PC-3 (cell line): ENCODE measurements at regions of chr1 and their contacts with region 1.

Region 1: GRCh38 chr1:241817261-241817792 is 30.7 kb upstream of the EXO1 start:
- DNase-seq: peak; percentile 91
- ATAC-seq: peak; percentile 93
- H3K4me3 ChIP-seq: no peak overlapping the region
- H3K27ac ChIP-seq: peak overlapping the region; percentile 57
- H3K4me1 ChIP-seq: peaks cover 34% of the 10 kb centered on the region
- H3K27me3 ChIP-seq: no peaks in the 10 kb centered on the region
- CTCF ChIP-seq: no peak

Region 2: GRCh38 chr1:241749901-241750695 is 67.2 kb before region 1 on chr1:
- CTCF ChIA-PET with region 1: no interaction called
- POLR2A ChIA-PET with region 1: interaction called, 3 read pairs
- intact Hi-C with region 1: loop called (anchors 1 kb)
- DNase-seq: peak; percentile 99
- ATAC-seq: peak; percentile 63
- H3K4me3 ChIP-seq: peak overlapping the region; percentile 69
- H3K27ac ChIP-seq: peak overlapping the region; percentile 72
- H3K4me1 ChIP-seq: peaks cover 22% of the 10 kb centered on the region
- H3K27me3 ChIP-seq: no peaks in the 10 kb centered on the region
- CTCF ChIP-seq: no peak

Region 3: DNA sequence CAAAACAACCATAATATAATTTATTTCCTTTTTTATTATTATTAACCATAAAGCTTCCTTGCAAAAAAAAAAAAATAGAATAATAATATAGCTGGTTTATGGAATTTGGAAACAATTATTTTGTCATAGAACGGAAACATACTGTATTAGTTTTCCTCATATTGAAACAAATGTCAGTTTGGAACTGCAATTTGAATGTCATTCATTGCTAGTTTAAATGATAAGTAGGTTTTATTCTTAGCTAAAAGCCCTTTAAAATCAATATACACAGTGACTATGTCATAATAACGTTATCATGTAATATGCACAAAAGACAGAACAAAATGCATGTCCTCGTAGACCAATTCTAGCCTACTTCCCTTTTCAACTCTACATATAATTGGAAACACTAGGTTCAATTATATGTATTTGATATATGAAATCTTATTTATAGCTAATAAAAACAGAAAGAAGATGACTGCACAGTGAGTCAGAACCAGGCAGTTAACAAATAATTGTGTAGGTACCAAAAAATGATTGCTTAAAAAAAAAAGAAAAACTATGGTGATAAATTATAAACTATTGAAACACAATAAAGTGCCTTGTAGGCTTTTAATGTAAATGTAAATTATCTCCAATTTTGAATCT is 54.5 kb before region 1 on chr1:
- CTCF ChIA-PET with region 1: no interaction called
- POLR2A ChIA-PET with region 1: no interaction called
- intact Hi-C with region 1: loop called (anchors 5 kb)
- DNase-seq: peak; percentile 87
- ATAC-seq: peak; percentile 93
- H3K4me3 ChIP-seq: no peak overlapping the region
- H3K27ac ChIP-seq: no peak overlapping the region
- H3K4me1 ChIP-seq: peaks cover 13% of the 10 kb centered on the region
- H3K27me3 ChIP-seq: no peaks in the 10 kb centered on the region
- CTCF ChIP-seq: no peak